ENCODE measurements at regions of chr2 and their contacts with region 1.

Region 1: GRCh38 chr2:189854940-189855339 is 70.7 kb downstream of the PMS1 start:
- DNase-seq: peak; percentile 62
- ATAC-seq: peak; percentile 57; the same call in 1 of the 2 replicates
- H3K4me3 ChIP-seq: no peak overlapping the region
- H3K27ac ChIP-seq: no peak overlapping the region; the same call in 1 of the 2 replicates
- H3K4me1 ChIP-seq: no peaks in the 10 kb centered on the region; the same call in 1 of the 2 replicates
- H3K27me3 ChIP-seq: no peaks in the 10 kb centered on the region
- CTCF ChIP-seq: no peak
- POLR2A ChIP-seq: no peak
- RAD21 ChIP-seq: no peak

Region 2: DNA sequence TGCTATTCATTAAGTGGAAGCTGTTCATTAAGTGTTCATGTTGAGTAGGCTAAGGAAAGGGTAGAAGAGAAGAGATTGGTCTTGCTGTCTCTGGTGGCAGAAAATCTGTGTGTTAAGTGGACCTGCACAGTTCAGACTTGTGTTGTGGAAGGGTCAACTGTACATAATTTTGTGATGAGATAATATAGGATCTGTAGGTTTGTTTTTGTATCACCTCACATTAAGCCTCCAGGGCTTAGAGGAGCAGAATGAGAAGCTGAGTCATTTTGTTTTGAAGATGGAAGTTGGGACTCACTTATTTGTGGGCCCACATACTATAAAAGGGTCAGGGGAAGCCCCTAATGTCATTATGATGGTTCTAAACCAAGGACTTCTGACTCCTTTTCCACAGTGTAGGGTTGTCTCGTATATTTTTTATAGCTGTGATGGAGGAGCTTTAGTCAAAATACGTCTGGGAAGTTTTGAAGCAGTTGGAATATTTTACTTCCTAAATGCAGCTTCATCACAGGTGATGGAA is 52.5 kb before region 1 on chr2:
- CTCF ChIA-PET with region 1: no interaction called
- POLR2A ChIA-PET with region 1: no interaction called
- dilution Hi-C with region 1: no loop called
- in situ Hi-C with region 1: no loop called
- intact Hi-C with region 1: no loop called
- DNase-seq: peak; percentile 27
- ATAC-seq: no peak
- H3K4me3 ChIP-seq: no peak overlapping the region
- H3K27ac ChIP-seq: no peak overlapping the region
- H3K4me1 ChIP-seq: peaks cover 8% of the 10 kb centered on the region; the same call in 1 of the 2 replicates
- H3K27me3 ChIP-seq: no peaks in the 10 kb centered on the region
- CTCF ChIP-seq: no peak
- POLR2A ChIP-seq: no peak
- RAD21 ChIP-seq: no peak

Region 3: GRCh38 chr2:189835855-189836558 is 18.9 kb before region 1 on chr2:
- CTCF ChIA-PET with region 1: no interaction called
- POLR2A ChIA-PET with region 1: interaction called, 12 read pairs
- dilution Hi-C with region 1: no loop called
- in situ Hi-C with region 1: no loop called
- intact Hi-C with region 1: no loop called
- DNase-seq: no peak
- ATAC-seq: no peak
- H3K4me3 ChIP-seq: no peak overlapping the region
- H3K27ac ChIP-seq: peak overlapping the region; percentile 33; the same call in 1 of the 2 replicates
- H3K4me1 ChIP-seq: 0 out of 2 replicates have a peak, but pooled peaks cover 2% of the 10 kb centered on the region
- H3K27me3 ChIP-seq: no peaks in the 10 kb centered on the region
- CTCF ChIP-seq: no peak
- POLR2A ChIP-seq: no peak
- RAD21 ChIP-seq: no peak